ENCODE measurements at regions of chr6 and their contacts with region 1.

Region 1: DNA sequence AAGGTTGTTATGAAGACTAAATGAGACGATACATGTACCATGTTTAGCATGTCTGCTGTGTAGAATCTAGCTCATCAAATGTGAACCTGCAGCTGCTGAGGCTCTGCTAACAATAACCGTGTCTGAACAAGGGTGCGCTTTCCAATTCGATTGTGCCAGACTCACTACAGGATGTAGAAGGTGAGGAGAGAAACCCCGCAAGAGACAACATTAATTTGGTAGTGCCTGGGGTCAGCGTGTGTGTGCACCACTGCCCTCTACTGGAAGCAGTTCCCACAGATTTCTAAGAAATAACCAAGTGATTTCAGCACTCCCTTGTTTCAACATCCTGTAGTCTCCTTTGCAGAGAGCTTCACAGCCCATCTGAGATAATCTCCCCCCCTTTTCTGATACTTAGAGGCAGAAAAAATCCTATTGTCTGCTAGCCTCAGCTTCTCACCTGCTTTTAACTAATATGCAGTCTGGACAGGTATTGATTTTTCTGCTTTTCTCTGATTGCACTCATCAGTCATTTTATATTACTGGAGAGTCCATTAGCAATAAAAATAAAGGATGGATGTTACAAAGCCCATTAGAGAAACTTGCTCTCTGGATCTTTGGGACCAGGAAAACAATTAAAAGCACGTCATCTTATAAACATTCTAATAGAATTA is 96.7 kb upstream of the BACH2 start:
- DNase-seq: peak; percentile 35 to 79 (median 69)
- H3K4me3 ChIP-seq: no peak overlapping the region
- H3K4me3 Mint-ChIP-seq: no peak overlapping the region
- H3K27ac ChIP-seq: no peak overlapping the region
- H3K27ac Mint-ChIP-seq: peak overlapping the region; percentile 0 to 75 (median 60)
- H3K4me1 ChIP-seq: peaks cover 25% of the 10 kb centered on the region
- H3K4me1 Mint-ChIP-seq: peaks cover 30 to 36% (median 34%) of the 10 kb centered on the region in 3 donors
- H3K27me3 ChIP-seq: no peaks in the 10 kb centered on the region
- H3K27me3 Mint-ChIP-seq: no peaks in the 10 kb centered on the region

Region 2: GRCh38 chr6:90383196-90383822 is 10.0 kb before region 1 on chr6:
- CTCF ChIA-PET with region 1: interaction called, 11 read pairs
- POLR2A ChIA-PET with region 1: interaction called, 3 read pairs
- DNase-seq: peak in 2 of 5 donors; percentile 23 to 40
- H3K4me3 ChIP-seq: no peak overlapping the region
- H3K4me3 Mint-ChIP-seq: no peak overlapping the region
- H3K27ac ChIP-seq: no peak overlapping the region
- H3K27ac Mint-ChIP-seq: no peak overlapping the region
- H3K4me1 ChIP-seq: peaks cover 13% of the 10 kb centered on the region
- H3K4me1 Mint-ChIP-seq: peaks cover 19 to 22% (median 20%) of the 10 kb centered on the region in 3 donors
- H3K27me3 ChIP-seq: no peaks in the 10 kb centered on the region
- H3K27me3 Mint-ChIP-seq: peaks cover 7 to 17% of the 10 kb centered on the region in 2 donors

Region 3: GRCh38 chr6:90413867-90414266 is 20.5 kb after region 1 on chr6:
- CTCF ChIA-PET with region 1: interaction called, 30 read pairs
- POLR2A ChIA-PET with region 1: interaction called, 5 read pairs
- DNase-seq: peak; percentile 50 to 91 (median 76)
- H3K4me3 ChIP-seq: peak overlapping the region; percentile 10
- H3K4me3 Mint-ChIP-seq: peak overlapping the region; percentile 68 to 92 (median 84)
- H3K27ac ChIP-seq: no peak overlapping the region
- H3K27ac Mint-ChIP-seq: peak overlapping the region; percentile 86 to 99 (median 95)
- H3K4me1 ChIP-seq: peaks cover 33% of the 10 kb centered on the region
- H3K4me1 Mint-ChIP-seq: peaks cover 37 to 50% (median 48%) of the 10 kb centered on the region in 3 donors
- H3K27me3 ChIP-seq: no peaks in the 10 kb centered on the region
- H3K27me3 Mint-ChIP-seq: peaks cover 0 to 6% of the 10 kb centered on the region in 2 donors

Region 4: DNA sequence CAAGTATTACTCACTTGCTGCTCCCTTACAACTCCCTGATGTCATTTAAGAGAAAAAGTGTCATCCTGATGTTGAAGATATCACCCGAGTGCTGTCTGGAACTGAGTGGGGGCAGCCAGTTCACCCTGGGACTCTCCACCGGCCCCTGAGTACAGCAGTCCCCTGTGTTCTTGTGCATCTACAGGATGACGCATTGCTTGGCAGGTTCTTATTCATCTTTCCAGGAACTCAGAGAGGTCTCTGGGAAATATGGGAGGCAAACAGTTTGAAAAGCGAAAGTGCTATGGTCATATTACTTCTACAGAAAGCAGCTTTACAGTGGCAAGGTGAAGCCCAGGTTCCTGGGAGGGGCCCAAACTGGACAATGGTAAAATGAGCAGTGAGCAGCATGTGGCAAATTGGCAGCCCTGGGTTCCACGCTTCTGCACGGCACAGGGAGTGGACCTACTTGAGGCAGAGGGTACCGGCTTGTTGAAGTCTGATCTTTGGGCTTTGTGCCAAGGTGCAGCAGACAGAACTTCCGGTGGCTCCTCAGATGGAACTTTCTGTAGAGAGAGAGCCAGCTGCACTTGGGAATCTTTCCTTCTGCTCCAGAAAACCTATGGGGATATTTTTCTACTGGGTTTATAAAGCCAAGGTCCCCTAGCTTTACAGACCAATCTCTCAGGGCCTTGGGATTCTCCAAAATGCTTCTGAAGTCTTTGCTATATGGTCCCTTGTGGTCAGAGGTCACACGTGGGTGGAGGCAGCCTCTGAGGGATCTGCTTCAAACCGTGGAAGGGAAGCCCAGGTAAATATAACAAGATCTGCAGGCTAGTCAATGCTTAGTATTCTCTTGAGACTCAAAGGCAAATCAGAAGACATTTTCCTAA is 65.2 kb after region 1 on chr6:
- CTCF ChIA-PET with region 1: interaction called, 22 read pairs
- POLR2A ChIA-PET with region 1: no interaction called
- DNase-seq: peak in 4 of 5 donors; percentile 16 to 64 (median 38)
- H3K4me3 ChIP-seq: peak overlapping the region; percentile 20
- H3K4me3 Mint-ChIP-seq: peak overlapping the region in 6 of 7 donors; percentile 6 to 77 (median 72)
- H3K27ac ChIP-seq: peak overlapping the region; percentile 66
- H3K27ac Mint-ChIP-seq: peak overlapping the region in 7 of 8 donors; percentile 43 to 90 (median 81)
- H3K4me1 ChIP-seq: peaks cover 42% of the 10 kb centered on the region
- H3K4me1 Mint-ChIP-seq: peaks cover 39 to 61% (median 53%) of the 10 kb centered on the region in 3 donors
- H3K27me3 ChIP-seq: no peaks in the 10 kb centered on the region
- H3K27me3 Mint-ChIP-seq: no peaks in the 10 kb centered on the region

Region 5: DNA sequence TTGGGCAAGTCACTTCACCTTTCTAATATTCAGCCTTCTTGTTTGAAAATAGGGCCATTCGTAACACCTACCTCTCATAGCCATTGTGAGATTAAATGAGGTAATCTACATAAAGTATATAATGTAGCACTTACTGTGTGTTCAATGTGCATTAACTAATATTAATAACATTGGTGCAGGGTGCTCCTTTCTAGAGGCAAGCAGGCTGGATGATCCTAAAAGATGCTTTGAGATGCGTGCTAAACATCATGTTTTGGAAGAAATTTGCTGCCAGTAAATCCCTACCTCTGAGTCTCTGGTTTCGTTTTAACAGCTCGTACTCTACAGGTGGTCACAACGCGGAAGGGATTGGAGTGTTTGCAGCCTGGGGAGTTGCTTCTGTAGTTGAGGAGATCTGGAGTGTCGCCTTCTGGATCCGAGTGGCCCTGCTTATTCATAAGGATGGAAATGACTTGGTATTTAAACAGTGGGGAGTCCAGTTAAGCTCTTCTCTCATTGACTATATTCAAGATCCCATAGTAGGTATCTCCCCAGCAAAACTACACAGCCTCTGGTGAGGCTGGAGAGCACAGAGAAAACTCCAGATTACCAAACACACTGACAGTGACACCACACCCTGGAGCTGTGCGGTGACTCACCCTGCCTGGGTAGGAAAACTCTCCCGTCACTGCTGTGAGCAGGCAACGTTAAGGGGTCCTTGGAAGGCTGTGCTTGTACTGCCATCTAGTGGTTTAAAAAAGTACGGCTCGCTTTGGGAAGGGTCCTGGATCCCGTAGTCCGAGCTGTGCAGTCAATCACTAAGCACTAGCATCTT is 85.6 kb after region 1 on chr6:
- CTCF ChIA-PET with region 1: interaction called, 17 read pairs
- POLR2A ChIA-PET with region 1: interaction called, 3 read pairs
- DNase-seq: peak; percentile 67 to 89 (median 74)
- H3K4me3 ChIP-seq: no peak overlapping the region
- H3K4me3 Mint-ChIP-seq: peak overlapping the region in 4 of 7 donors; percentile 36 to 55 (median 43)
- H3K27ac ChIP-seq: no peak overlapping the region
- H3K27ac Mint-ChIP-seq: peak overlapping the region in 6 of 8 donors; percentile 17 to 89 (median 84)
- H3K4me1 ChIP-seq: peaks cover 15% of the 10 kb centered on the region
- H3K4me1 Mint-ChIP-seq: peaks cover 14 to 36% (median 28%) of the 10 kb centered on the region in 3 donors
- H3K27me3 ChIP-seq: no peaks in the 10 kb centered on the region
- H3K27me3 Mint-ChIP-seq: no peaks in the 10 kb centered on the region

Region 6: DNA sequence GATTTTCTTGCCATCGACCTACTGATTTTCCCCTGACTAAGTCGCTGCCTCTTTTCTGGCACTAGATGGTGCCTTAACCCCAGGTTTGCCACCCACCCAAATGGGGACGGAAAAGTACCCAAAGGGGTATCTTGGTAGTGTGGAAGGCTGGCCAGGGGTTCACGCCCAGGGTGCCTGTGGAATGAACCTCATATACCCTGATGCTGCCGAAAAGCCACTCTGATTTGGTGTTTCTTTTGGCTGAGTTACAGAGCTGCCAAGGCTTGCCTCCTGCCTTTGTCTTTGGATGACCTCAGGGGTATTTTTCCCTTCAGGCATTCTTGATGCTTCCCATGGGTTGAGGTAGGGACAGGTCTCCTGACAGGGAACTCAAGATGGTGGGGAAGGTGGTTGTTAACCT is 115.4 kb after region 1 on chr6:
- CTCF ChIA-PET with region 1: no interaction called
- POLR2A ChIA-PET with region 1: no interaction called
- DNase-seq: no peak
- H3K4me3 ChIP-seq: no peak overlapping the region
- H3K4me3 Mint-ChIP-seq: no peak overlapping the region
- H3K27ac ChIP-seq: no peak overlapping the region
- H3K27ac Mint-ChIP-seq: no peak overlapping the region
- H3K4me1 ChIP-seq: no peaks in the 10 kb centered on the region
- H3K4me1 Mint-ChIP-seq: no peaks in the 10 kb centered on the region
- H3K27me3 ChIP-seq: no peaks in the 10 kb centered on the region
- H3K27me3 Mint-ChIP-seq: no peaks in the 10 kb centered on the region

Region 7: DNA sequence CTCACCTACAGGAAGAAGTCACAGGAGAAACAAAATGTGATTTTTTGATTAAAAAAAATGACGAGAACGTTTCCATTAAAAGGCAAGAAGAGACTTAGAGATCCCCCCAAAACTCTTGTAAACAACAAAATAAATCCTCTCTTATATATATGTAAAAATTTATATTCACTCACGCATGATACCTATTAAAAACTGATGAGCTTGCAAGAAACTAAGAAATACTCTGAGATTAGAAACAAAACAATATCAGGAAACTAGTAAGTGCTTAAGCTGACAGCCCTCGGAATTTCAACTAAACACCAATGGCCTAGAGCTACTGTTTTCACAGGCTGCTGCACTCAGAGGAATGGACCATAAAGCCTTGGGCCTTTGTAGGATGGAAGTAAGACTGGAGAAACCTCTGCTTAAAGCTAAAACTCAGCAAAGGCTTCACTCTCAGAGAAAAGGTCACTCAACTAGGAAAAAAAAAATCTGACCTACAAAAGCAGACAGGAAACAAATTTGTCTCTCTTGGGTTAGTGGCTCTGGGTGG is 130.5 kb after region 1 on chr6:
- CTCF ChIA-PET with region 1: no interaction called
- POLR2A ChIA-PET with region 1: no interaction called
- DNase-seq: no peak
- H3K4me3 ChIP-seq: no peak overlapping the region
- H3K4me3 Mint-ChIP-seq: no peak overlapping the region
- H3K27ac ChIP-seq: no peak overlapping the region
- H3K27ac Mint-ChIP-seq: peak overlapping the region in 1 of 8 donors; percentile 5
- H3K4me1 ChIP-seq: no peaks in the 10 kb centered on the region
- H3K4me1 Mint-ChIP-seq: peaks cover 0 to under 1% (median 0%) of the 10 kb centered on the region in 3 donors
- H3K27me3 ChIP-seq: no peaks in the 10 kb centered on the region
- H3K27me3 Mint-ChIP-seq: no peaks in the 10 kb centered on the region

Measured in CD8-positive, alpha-beta memory T cell (primary cell).